Posterior vena cava (tissue), 2 donors: ENCODE measurements at regions of chr3 and their contacts with region 1.

Region 1: DNA sequence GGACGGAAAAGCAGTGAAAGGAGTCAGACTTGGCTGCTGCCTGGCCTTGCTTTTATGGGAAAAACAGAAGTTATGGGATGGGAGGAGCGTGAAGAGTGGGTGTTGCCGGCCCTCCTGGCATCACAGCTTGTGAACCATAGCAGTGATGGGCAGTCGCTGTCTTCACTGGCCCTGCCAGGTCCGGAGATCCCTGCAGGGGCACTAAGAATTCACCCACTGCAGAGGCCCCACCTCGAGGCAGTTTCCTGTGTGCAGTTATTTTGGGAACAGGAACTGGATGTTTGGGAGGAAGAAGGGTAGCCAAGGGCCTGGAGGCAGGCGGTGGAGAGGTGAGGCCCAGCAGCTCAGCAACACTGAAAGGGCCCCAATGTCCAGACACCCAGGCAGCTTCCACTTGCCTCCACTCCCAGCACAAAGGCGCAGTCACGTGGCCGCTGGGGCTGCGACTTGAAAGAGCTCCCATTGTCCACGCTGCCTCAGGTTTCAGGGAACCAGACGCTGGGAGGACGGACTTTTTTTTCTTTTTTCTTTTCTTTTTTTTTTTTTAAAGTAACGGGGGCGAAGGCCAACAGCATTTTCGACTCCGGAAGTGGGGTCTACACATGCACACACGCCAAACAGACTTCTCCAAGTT is 255.6 kb downstream of the ZNF621 start:
- DNase-seq: peak; percentile 94

Region 2: GRCh38 chr3:40645883-40646282 is 134.5 kb before region 1 on chr3:
- intact Hi-C with region 1: no loop called
- DNase-seq: no peak

Region 3: GRCh38 chr3:40877631-40878463 is 97.4 kb after region 1 on chr3:
- intact Hi-C with region 1: loop called in 1 of 2 experiments (anchors 5 kb)
- DNase-seq: peak; percentile 90